ENCODE measurements at regions of chr2 and their contacts with region 1.

Region 1: GRCh38 chr2:30208452-30208851 is 22.9 kb upstream of the LBH start:
- DNase-seq: peak; percentile 69
- H3K4me3 ChIP-seq: no peak overlapping the region
- H3K27ac ChIP-seq: no peak overlapping the region
- H3K4me1 ChIP-seq: no peaks in the 10 kb centered on the region
- H3K27me3 ChIP-seq: peaks cover 0 to 2% of the 10 kb centered on the region in 2 experiments
- CTCF ChIP-seq: peak; percentile 80 to 85
- POLR2A ChIP-seq: no peak

Region 2: DNA sequence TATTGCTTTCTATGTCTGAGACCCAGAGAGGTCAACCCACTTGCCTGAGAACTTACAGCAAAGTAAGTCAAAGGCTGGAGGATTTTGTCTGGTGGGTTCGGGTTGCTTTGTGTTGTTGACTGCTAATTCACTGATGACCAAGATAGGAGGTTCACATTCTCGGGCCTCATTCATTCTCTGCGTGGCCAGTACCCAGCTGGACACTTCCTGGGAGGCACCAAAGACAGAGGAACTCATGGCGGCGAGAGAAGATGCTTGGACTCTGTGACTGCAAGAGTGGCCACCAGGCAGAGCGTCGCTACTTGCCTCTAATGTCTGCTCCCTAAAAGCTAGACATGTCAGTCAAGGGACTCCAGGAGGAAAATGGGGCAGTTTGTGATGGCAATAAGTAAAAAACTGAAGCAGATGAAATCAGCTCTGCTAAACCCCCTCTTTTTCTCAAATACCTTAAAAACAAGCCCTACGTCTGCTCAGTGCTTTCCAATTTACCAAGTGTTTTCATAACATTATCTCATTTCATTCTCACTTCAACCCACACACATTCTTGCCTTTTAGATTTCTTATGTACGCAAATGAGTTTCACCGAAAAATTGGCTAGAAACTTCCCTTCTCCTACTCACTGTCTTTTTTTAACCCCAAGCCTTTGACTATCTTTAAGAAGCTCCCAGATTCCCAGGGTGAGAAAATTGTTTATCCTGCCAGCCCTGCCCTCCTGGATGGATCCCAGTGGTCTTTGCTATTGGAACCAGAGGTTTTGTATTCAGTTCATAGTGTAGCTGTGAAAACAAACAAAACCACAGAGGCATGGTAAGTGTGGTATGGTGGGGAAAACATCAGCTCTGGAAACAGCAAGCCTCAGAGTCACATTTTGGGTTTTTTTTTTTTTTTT is 17.9 kb after region 1 on chr2:
- CTCF ChIA-PET with region 1: interaction called, 14 read pairs
- POLR2A ChIA-PET with region 1: interaction called, 3 read pairs
- dilution Hi-C with region 1: no loop called
- intact Hi-C with region 1: no loop called
- DNase-seq: no peak
- H3K4me3 ChIP-seq: no peak overlapping the region
- H3K27ac ChIP-seq: no peak overlapping the region
- H3K4me1 ChIP-seq: peaks cover 5% of the 10 kb centered on the region
- H3K27me3 ChIP-seq: peaks cover 0 to 5% of the 10 kb centered on the region in 2 experiments
- CTCF ChIP-seq: no peak
- POLR2A ChIP-seq: no peak

Region 3: DNA sequence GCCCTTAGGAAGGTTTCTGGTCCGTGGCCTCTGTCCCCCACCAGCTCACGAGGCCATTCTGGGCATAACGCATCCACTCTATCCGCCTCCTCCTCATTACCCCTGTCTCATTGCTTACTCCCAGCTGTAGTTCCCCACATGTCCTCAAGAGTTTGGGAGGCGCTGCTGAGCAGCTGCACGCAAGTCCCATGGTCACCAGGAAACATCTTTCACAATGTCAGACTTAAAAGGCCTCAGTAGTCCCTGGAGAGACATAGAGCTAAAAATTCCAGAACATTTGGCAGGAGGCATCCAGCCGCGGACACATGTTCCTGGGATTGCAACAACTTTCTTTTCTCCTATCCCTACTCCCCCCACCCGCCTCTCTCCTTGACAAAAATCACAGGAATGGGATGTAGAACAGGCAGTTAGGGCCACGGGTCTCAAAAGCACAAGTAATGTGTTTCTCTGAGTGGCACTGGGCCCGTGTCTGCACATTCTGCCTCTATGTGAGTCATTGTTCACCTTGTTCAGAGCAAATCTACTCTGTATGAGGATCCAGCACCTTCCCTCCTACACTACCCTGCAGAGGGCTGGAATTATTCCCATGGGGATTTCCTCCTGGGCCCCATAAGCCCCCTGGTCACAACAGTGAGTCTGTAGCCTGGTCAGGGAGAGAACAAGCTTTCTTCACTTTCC is 31.0 kb after region 1 on chr2:
- CTCF ChIA-PET with region 1: interaction called, 16 read pairs
- POLR2A ChIA-PET with region 1: no interaction called
- dilution Hi-C with region 1: no loop called
- intact Hi-C with region 1: no loop called
- DNase-seq: peak; percentile 58
- H3K4me3 ChIP-seq: no peak overlapping the region
- H3K27ac ChIP-seq: no peak overlapping the region
- H3K4me1 ChIP-seq: no peaks in the 10 kb centered on the region
- H3K27me3 ChIP-seq: no peaks in the 10 kb centered on the region
- CTCF ChIP-seq: peak; percentile 87 to 88
- POLR2A ChIP-seq: no peak

Region 4: DNA sequence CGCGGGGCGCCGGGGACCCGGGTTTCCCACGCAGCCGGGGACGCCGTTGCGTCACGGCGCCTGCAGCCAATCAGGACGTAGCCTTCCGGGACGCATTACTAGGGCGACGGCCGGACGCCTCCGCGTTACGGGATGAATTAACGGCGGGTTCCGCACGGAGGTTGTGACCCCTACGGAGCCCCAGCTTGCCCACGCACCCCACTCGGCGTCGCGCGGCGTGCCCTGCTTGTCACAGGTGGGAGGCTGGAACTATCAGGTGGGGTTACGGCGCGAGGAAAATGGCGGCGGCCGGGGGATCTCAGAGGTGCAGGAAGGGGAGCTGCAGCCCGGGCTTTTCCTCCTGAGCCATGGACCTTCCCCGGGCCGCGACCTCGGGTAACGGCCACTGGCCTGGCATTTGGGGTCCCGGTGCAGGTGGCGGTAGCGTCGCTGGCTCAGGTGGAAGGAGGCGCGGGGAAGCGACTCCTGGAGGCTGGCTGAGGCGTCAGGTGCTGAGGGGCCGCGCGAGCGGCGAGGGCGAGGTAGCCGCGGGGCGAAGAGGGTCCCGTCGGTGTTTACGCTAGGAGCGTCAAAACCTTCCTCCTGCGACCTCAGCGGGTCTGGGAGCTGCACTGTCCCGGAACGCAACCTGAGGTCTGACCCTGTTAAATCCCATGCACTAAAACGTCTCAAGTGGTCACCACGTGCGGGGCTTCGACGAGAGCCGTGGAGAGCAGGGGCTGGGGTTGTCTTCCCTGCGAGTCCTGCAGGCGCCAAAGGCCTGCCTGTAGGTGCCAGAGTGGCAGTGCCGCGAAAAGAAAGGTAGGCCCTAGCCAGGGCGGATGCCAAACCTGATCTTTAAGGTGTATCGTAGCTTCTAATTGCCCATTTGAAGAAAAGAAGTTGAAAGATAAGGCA is 238.9 kb after region 1 on chr2 and contains the start of gene LCLAT1:
- CTCF ChIA-PET with region 1: interaction called, 6 read pairs
- POLR2A ChIA-PET with region 1: no interaction called
- dilution Hi-C with region 1: no loop called
- intact Hi-C with region 1: loop called (anchors 1 kb)
- DNase-seq: peak; percentile 79
- H3K4me3 ChIP-seq: peak within 1 kb of the TSS; percentile 89 to 91 (median 90)
- H3K27ac ChIP-seq: peak within 1 kb of the TSS; percentile 83
- H3K4me1 ChIP-seq: peaks cover 13% of the 10 kb centered on the region
- H3K27me3 ChIP-seq: no peaks in the 10 kb centered on the region
- CTCF ChIP-seq: no peak
- POLR2A ChIP-seq: peak; percentile 18
- total RNA-seq, gene LCLAT1: 17.1 and 20.8 TPM in 2 replicates

Region 5: GRCh38 chr2:30475542-30475941 is 267.1 kb after region 1 on chr2:
- CTCF ChIA-PET with region 1: interaction called, 10 read pairs
- POLR2A ChIA-PET with region 1: no interaction called
- dilution Hi-C with region 1: no loop called
- intact Hi-C with region 1: no loop called
- DNase-seq: no peak
- H3K4me3 ChIP-seq: no peak overlapping the region
- H3K27ac ChIP-seq: no peak overlapping the region
- H3K4me1 ChIP-seq: no peaks in the 10 kb centered on the region
- H3K27me3 ChIP-seq: no peaks in the 10 kb centered on the region
- CTCF ChIP-seq: no peak
- POLR2A ChIP-seq: no peak

Region 6: GRCh38 chr2:30691948-30692828 is 483.7 kb after region 1 on chr2:
- CTCF ChIA-PET with region 1: interaction called, 21 read pairs
- POLR2A ChIA-PET with region 1: no interaction called
- dilution Hi-C with region 1: no loop called
- intact Hi-C with region 1: no loop called
- DNase-seq: no peak
- H3K4me3 ChIP-seq: no peak overlapping the region
- H3K27ac ChIP-seq: no peak overlapping the region
- H3K4me1 ChIP-seq: no peaks in the 10 kb centered on the region
- H3K27me3 ChIP-seq: no peaks in the 10 kb centered on the region
- CTCF ChIP-seq: no peak
- POLR2A ChIP-seq: no peak

Region 7: GRCh38 chr2:30862054-30862651 is 653.7 kb after region 1 on chr2:
- CTCF ChIA-PET with region 1: no interaction called
- POLR2A ChIA-PET with region 1: no interaction called
- dilution Hi-C with region 1: no loop called
- intact Hi-C with region 1: loop called (anchors 5 kb)
- DNase-seq: peak; percentile 20
- H3K4me3 ChIP-seq: no peak overlapping the region
- H3K27ac ChIP-seq: no peak overlapping the region
- H3K4me1 ChIP-seq: no peaks in the 10 kb centered on the region
- H3K27me3 ChIP-seq: no peaks in the 10 kb centered on the region
- CTCF ChIP-seq: peak; percentile 39 to 49
- POLR2A ChIP-seq: no peak